Activated T-helper 2 cell treated with anti-CD3 and anti-CD28 coated beads, Interferon-gamma antibody, Interleukin-2, Interleukin-4, amounts not matched to agents 10 μg/mL and 5 μg/mL and 100 μg/mL, durations not matched to agents 14 hours and 24 hours and 36 hours (primary cell): ENCODE measurements at regions of chr2 and their contacts with region 1.

Region 1: DNA sequence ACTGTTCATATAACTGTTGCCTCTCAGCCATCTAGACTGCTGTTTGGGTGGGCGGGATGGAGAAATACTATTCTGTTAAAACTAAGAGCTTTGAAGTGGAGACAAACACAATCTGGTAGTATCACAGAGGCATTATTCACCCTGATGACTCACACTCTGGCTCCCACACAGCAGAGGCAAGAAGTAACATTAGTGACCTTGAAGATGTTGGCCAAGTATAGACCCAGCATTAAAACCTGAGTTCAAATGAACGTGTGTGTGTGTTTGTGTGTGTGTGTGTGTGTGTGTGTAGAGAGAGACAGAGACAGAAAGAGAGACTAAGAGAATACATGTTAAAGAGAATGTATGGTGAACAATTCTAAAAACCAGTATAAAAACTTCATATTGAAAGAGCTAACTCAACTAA is 22.5 kb upstream of the ACVR1 start:
- DNase-seq: peak; percentile 44
- H3K4me3 Mint-ChIP-seq: peak overlapping the region; percentile 86
- H3K27ac Mint-ChIP-seq: peak overlapping the region; percentile 98
- H3K4me1 Mint-ChIP-seq: peaks cover 74% of the 10 kb centered on the region
- H3K27me3 Mint-ChIP-seq: no peaks in the 10 kb centered on the region

Region 2: DNA sequence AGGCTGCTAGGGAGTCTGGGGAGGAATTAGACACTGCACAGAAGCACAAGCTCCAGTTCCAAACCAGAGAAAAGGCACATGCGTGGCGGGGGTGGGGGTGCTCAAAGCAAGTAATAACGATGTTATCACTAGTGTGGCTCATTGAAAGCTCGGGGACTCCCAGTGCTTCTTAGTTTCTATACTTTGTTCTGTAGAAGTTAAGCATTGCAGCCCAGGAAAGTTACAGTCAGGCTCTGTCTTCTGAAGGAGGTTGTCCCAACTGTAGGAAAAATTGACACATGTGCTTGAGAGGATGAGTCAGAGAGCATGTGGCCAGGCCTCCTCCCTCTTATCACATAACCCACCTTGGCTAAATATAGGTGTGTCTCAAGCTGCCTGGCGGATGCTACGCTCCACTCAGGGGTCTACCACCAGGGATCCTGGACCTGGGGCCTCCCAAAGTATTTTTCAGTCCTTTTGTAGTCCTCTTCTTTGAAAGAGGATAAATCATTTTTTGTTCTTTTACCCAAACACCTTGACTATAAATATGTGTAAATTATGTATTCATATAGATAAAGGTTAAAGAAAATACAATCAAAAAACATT is 637.3 kb before region 1 on chr2:
- intact Hi-C with region 1: loop called (anchors 5 kb)
- DNase-seq: peak; percentile 37
- H3K4me3 Mint-ChIP-seq: peak overlapping the region; percentile 60
- H3K27ac Mint-ChIP-seq: peak overlapping the region; percentile 88
- H3K4me1 Mint-ChIP-seq: peaks cover 52% of the 10 kb centered on the region
- H3K27me3 Mint-ChIP-seq: peaks cover 2% of the 10 kb centered on the region

Region 3: DNA sequence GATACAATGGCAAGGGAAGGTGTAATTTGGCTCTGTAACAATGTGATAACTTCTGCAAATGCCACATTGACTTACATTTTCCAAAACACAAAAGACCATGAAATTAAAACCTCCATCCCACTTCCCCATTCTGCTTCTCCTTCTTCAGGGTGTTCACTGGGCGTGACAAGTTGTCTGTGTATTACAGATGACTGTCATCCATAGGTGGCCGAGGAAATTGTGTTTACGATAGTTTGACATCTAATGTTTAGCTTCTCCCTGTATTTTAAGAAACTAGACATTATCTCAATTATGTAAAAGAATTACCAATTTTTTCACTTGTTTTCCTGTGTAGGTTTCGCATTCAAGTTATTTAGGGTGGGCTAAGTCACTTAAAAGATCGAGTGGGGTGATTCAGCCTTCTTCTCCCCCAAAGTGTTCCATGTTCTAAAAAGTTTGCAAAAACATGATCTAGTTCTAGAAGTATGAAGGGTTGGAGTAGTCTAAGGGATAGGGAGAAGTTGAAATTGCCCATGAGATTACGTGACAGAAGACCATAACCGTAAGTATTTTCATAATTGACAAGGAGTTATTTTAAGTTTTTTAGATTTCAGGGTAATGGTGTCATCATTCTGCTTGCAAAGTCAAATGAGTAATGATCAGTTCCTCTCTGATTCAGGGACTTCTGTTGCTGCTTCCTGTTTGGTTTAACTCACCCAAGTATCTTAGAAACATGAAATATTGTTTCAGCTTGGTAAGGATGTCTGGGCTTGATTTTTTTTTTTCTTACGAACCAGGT is 429.5 kb before region 1 on chr2:
- intact Hi-C with region 1: loop called (anchors 2 kb)
- DNase-seq: no peak
- H3K4me3 Mint-ChIP-seq: peak overlapping the region; percentile 69
- H3K27ac Mint-ChIP-seq: peak overlapping the region; percentile 96
- H3K4me1 Mint-ChIP-seq: peaks cover 86% of the 10 kb centered on the region
- H3K27me3 Mint-ChIP-seq: no peaks in the 10 kb centered on the region

Region 4: DNA sequence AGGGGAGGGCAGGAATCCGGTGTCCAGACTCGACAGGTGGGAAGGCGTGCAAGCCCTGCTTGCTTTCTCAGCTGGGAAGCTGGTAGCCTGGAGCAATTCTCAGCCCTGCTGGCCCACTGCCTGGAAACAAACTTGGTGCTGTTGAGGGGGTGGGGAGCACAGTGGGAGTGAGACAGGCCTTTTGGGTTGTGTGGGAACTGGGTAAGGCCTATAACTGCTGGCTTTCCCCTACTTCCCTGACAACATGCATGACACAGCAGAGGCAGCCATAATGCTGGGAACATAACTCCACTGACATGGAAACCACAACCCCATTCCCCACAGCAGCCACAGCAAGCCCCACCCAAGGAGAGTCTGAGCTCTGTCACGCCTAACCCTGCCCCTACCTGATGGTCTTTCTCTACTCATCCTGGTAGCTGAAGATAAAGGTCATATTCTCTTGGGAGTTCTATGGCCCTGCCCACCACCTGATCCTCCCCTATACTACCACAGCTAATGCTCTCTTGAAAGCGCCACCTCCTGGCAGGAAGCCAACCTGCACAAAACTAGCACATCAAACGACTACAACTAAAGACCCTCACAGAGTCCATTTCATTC is 147.0 kb before region 1 on chr2:
- intact Hi-C with region 1: loop called (anchors 1 kb)
- DNase-seq: no peak
- H3K4me3 Mint-ChIP-seq: no peak overlapping the region
- H3K27ac Mint-ChIP-seq: no peak overlapping the region
- H3K4me1 Mint-ChIP-seq: peaks cover 30% of the 10 kb centered on the region
- H3K27me3 Mint-ChIP-seq: no peaks in the 10 kb centered on the region

Region 5: DNA sequence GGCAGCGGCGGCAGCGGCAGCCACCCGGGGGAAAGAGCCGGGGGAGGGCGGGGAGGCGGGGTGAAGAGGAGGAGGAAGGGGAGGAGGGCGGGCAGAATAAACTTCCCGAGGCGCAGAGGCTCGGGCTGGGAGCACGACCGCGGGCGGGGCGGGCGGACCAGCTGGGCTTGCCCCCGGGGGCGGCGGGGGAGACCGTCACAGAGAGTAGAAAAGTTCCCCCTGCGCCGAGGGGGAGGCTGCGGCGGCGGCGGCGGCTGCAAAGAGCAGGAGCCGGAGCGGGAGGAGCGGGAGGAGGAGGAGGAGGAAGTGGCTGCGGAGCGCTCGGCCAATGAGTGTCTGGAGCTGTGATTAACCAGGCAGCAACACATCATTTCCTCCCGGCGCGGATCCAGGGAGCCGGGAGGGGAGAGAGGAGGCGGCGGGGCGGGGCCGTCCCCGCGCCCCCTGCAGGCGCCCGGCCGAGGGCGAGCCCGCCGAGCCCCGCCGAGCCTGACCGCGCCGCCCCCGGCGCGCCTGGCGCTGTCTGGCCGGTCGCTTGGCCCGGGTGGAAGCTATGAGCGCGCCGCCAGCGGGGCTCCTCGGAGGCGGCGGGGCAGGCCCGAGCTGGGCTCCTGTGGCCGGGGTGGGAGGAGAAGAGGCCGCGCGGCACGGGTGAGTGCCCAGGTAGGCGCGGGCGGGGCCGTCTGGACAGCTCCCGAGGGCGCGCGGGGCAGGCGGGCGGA is 22.4 kb before region 1 on chr2 and contains the start of gene ACVR1:
- intact Hi-C with region 1: loop called (anchors 1 kb)
- DNase-seq: peak; percentile 83
- H3K4me3 Mint-ChIP-seq: peak within 1 kb of the TSS; percentile 85
- H3K27ac Mint-ChIP-seq: peak within 1 kb of the TSS; percentile 86
- H3K4me1 Mint-ChIP-seq: peaks cover 62% of the 10 kb centered on the region
- H3K27me3 Mint-ChIP-seq: no peaks in the 10 kb centered on the region
- total RNA-seq, gene ACVR1: 26.7 and 27.1 TPM in 2 replicates

Region 6: DNA sequence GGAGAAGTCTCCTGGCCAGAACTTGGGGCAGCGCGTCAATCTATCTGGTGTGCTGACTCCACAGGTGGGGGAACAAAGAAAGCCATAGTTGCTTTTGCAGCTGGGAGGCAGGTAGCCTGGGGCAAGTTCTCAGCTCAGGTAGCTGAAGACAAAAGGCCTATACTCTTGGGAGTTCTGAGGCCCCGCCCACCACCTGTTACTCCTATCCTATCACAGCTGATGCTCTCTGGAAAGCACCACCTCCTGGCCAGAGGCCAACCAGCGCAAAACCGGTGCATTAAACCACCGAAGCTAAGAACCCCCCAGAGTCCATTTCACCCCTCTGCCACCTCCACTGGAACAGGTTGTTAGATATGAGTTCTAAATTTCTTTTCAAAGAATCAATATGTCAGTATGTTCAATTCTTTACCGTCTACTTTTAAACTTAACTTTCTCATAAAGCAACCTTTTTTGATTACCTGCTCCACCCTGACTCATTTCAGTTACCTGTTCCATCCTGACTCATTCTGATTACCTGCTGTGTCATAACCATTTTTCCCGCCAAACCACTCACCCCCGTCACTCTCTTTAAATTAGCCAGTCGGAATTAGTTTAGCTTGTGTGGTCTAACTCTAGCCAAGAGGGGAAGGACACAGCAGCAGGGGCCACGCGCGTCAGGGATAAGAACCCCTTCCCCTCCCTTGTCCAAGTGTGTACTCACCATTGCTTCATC is 246.5 kb after region 1 on chr2:
- intact Hi-C with region 1: no loop called
- DNase-seq: no peak
- H3K4me3 Mint-ChIP-seq: no peak overlapping the region
- H3K27ac Mint-ChIP-seq: no peak overlapping the region
- H3K4me1 Mint-ChIP-seq: no peaks in the 10 kb centered on the region
- H3K27me3 Mint-ChIP-seq: peaks cover 4% of the 10 kb centered on the region

Region 7: DNA sequence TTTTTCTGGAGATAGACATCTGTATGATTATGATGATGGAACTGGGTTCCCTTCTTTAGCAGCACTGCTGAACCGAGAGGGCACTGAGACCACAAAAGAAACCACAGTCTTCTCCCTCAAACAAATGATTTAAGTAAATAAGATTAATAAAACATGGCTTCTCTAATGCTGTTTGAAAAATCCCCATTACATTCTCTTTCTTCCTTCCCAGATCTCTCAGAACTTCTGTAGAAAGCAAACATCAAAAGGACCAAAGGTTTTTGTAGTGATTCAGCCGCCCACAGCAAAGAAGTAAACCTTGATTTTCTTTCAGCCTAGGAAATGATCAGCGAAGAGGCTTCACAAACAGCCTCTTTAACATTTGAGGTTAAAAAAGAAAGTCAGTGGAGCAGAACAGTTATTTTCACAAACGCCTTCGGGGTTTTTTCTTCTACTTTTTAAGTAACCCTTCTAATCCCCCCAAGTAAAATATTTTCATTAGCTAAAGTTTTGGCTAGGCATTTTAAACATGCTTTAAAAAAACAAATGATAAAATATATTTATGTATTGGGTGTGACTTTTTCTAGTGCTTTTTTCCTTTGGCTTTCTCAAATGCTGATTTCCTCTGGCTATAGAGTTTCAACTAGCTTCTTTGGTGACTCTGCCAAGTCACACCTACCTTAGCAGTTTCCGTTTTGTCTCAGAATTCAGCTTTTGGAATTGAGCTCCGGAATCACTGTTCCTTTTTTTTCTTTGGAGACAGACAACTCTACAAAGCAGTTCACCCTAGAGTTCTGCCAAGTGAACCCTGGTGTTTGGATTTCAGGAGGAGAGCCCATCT is 292.7 kb after region 1 on chr2:
- intact Hi-C with region 1: loop called (anchors 5 kb)
- DNase-seq: no peak
- H3K4me3 Mint-ChIP-seq: no peak overlapping the region
- H3K27ac Mint-ChIP-seq: peak overlapping the region; percentile 29
- H3K4me1 Mint-ChIP-seq: peaks cover 31% of the 10 kb centered on the region
- H3K27me3 Mint-ChIP-seq: peaks cover 27% of the 10 kb centered on the region